B cell (primary cell): ENCODE measurements at regions of chr3 and their contacts with region 1.

Region 1: DNA sequence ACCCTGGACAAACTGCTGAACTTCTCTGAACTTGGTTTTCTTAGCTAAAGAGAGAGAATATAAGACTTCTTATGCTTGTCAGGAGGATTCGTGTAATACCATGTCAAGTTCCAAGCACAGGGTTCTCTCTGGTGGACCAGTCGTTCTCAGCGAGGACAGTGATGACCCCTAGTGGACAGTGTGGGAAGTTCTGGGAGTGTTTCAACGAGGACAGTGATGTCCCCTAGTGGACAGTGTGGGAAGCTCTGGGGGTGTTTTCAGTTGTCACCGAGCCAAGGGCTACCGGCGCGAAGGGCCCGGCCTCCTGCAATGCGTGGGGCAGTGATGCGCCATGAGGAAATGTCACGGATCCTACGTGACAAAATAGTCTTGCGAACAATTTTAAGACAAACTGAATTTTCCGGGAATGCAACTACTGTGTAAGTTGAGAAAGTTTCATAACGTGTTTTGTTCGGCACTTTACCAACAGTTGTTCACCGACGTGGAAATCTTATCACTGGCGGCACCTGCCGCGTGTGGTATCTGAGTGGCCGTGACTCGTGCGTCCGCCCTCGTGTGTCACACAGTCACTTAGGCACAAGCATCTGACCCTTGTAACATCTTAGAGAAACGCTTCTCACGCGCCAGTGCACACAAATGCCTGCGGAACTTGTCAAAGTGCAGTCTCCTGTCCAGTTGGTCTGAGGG is 39.3 kb upstream of the MUC4 start:
- DNase-seq: peak; percentile 93
- ATAC-seq: peak; percentile 100
- H3K4me3 ChIP-seq: peak overlapping the region in 2 of 5 experiments; percentile 12 to 15
- H3K4me3 Mint-ChIP-seq: peak overlapping the region; percentile 57
- H3K27ac ChIP-seq: no peak overlapping the region
- H3K27ac Mint-ChIP-seq: peak overlapping the region; percentile 53
- H3K4me1 ChIP-seq: peaks cover 4 to 8% of the 10 kb centered on the region in 2 donors
- H3K4me1 Mint-ChIP-seq: peaks cover 7% of the 10 kb centered on the region
- H3K27me3 ChIP-seq: no peaks in the 10 kb centered on the region
- H3K27me3 Mint-ChIP-seq: peaks cover 27% of the 10 kb centered on the region
- CTCF ChIP-seq: peak; percentile 100

Region 2: GRCh38 chr3:195616712-195617086 is 234.3 kb before region 1 on chr3:
- CTCF ChIA-PET with region 1: interaction called, 5 read pairs
- POLR2A ChIA-PET with region 1: no interaction called
- intact Hi-C with region 1: loop called (anchors 10 kb)
- DNase-seq: no peak
- ATAC-seq: no peak
- H3K4me3 ChIP-seq: no peak overlapping the region
- H3K4me3 Mint-ChIP-seq: no peak overlapping the region
- H3K27ac ChIP-seq: no peak overlapping the region
- H3K27ac Mint-ChIP-seq: no peak overlapping the region
- H3K4me1 ChIP-seq: peaks cover 0 to 3% of the 10 kb centered on the region in 2 donors
- H3K4me1 Mint-ChIP-seq: peaks cover 3% of the 10 kb centered on the region
- H3K27me3 ChIP-seq: no peaks in the 10 kb centered on the region
- H3K27me3 Mint-ChIP-seq: peaks cover 9% of the 10 kb centered on the region
- CTCF ChIP-seq: no peak

Region 3: DNA sequence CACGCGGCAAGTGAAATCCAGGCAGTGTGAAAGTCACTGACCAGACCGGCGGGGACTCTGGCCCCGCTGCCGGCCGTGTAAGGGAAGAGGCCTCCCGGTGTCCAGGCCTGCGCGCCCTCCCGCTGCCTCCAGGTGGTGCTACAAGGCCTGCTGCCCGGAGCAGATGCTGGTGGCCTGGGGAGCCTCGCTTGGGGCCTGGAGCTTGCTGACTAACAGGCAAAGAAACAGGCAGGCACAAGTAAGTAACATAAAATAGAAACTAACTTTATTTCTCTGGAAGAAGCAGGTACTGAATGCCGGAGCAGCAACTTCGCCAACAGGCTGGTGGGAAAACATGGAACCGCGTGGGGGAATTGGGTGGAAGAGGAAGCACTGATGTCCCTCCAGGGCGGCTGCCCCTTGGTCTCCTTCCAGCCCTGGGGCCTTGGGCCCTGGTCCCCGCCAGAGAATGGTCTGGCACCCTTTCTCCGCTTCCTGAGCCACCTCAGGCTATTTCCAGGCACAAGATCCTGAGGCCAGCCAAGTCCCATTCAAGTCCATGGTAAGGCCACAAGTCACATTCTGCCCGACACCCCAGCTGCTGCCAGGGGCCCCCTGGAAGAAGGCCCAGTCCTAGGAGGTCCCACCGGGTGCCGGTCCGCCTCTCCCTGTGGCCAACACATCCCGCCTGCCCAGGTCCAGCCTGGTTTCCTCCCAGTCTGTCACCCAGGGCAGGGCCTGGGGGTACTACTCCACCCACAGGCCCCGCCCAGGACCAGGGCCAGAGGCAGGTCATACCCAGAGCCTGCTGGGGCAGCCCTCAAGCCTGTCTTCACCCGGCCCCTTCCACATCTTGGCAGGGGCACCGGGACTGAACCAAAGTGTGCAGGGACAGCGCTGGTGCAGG is 12.4 kb after region 1 on chr3:
- CTCF ChIA-PET with region 1: interaction called, 14 read pairs
- POLR2A ChIA-PET with region 1: no interaction called
- intact Hi-C with region 1: no loop called
- DNase-seq: peak; percentile 73
- ATAC-seq: peak; percentile 82
- H3K4me3 ChIP-seq: no peak overlapping the region
- H3K4me3 Mint-ChIP-seq: no peak overlapping the region
- H3K27ac ChIP-seq: no peak overlapping the region
- H3K27ac Mint-ChIP-seq: peak overlapping the region; percentile 26
- H3K4me1 ChIP-seq: peaks cover 0 to 7% of the 10 kb centered on the region in 2 donors
- H3K4me1 Mint-ChIP-seq: peaks cover 11% of the 10 kb centered on the region
- H3K27me3 ChIP-seq: peaks cover 0 to 3% (median 0%) of the 10 kb centered on the region in 4 experiments
- H3K27me3 Mint-ChIP-seq: no peaks in the 10 kb centered on the region
- CTCF ChIP-seq: peak; percentile 90

Region 4: GRCh38 chr3:195894780-195895607 is 44.0 kb after region 1 on chr3:
- CTCF ChIA-PET with region 1: interaction called, 51 read pairs
- POLR2A ChIA-PET with region 1: interaction called, 4 read pairs
- intact Hi-C with region 1: no loop called
- DNase-seq: peak; percentile 85
- ATAC-seq: peak; percentile 68
- H3K4me3 ChIP-seq: peak overlapping the region; percentile 63 to 79 (median 74)
- H3K4me3 Mint-ChIP-seq: peak overlapping the region; percentile 95
- H3K27ac ChIP-seq: peak overlapping the region; percentile 75 to 87
- H3K27ac Mint-ChIP-seq: peak overlapping the region; percentile 95
- H3K4me1 ChIP-seq: peaks cover 49 to 58% of the 10 kb centered on the region in 2 donors
- H3K4me1 Mint-ChIP-seq: peaks cover 52% of the 10 kb centered on the region
- H3K27me3 ChIP-seq: no peaks in the 10 kb centered on the region
- H3K27me3 Mint-ChIP-seq: no peaks in the 10 kb centered on the region
- CTCF ChIP-seq: peak; percentile 77

Region 5: GRCh38 chr3:196096382-196096953 is 245.5 kb after region 1 on chr3:
- CTCF ChIA-PET with region 1: no interaction called
- POLR2A ChIA-PET with region 1: no interaction called
- intact Hi-C with region 1: no loop called
- DNase-seq: peak; percentile 62
- ATAC-seq: peak; percentile 81
- H3K4me3 ChIP-seq: peak overlapping the region in 2 of 5 experiments; percentile 9 to 18
- H3K4me3 Mint-ChIP-seq: peak overlapping the region; percentile 58
- H3K27ac ChIP-seq: peak overlapping the region; percentile 84 to 86
- H3K27ac Mint-ChIP-seq: peak overlapping the region; percentile 90
- H3K4me1 ChIP-seq: peaks cover 52 to 55% of the 10 kb centered on the region in 2 donors
- H3K4me1 Mint-ChIP-seq: peaks cover 34% of the 10 kb centered on the region
- H3K27me3 ChIP-seq: no peaks in the 10 kb centered on the region
- H3K27me3 Mint-ChIP-seq: no peaks in the 10 kb centered on the region
- CTCF ChIP-seq: no peak

Region 6: DNA sequence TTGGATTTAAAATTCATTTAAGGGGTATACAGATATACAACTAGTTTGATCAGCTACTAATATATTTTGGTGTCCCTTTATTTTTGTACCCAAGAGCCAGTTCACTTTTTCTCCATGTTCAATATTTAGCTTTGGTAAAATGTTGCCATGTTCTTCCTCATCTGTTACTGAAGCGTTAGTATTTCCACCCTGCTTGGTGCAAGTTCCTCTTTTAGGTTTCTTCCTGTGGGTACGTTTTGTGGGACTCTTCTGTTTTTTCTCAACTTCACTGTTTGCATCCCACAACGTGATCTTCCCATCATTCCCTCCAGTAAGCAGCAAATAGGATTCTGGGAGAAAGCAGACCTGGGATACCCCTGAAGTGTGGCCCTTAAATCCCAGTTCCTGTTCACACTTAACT is 703.2 kb after region 1 on chr3:
- CTCF ChIA-PET with region 1: no interaction called
- POLR2A ChIA-PET with region 1: no interaction called
- intact Hi-C with region 1: no loop called
- DNase-seq: peak; percentile 50
- ATAC-seq: no peak
- H3K4me3 ChIP-seq: peak overlapping the region in 1 of 5 experiments; percentile 6
- H3K4me3 Mint-ChIP-seq: peak overlapping the region; percentile 66
- H3K27ac ChIP-seq: peak overlapping the region; percentile 28 to 29
- H3K27ac Mint-ChIP-seq: peak overlapping the region; percentile 90
- H3K4me1 ChIP-seq: peaks cover 17 to 20% of the 10 kb centered on the region in 2 donors
- H3K4me1 Mint-ChIP-seq: peaks cover 22% of the 10 kb centered on the region
- H3K27me3 ChIP-seq: no peaks in the 10 kb centered on the region
- H3K27me3 Mint-ChIP-seq: no peaks in the 10 kb centered on the region
- CTCF ChIP-seq: no peak